ENCODE measurements at regions of chr12 and their contacts with region 1.

Region 1: DNA sequence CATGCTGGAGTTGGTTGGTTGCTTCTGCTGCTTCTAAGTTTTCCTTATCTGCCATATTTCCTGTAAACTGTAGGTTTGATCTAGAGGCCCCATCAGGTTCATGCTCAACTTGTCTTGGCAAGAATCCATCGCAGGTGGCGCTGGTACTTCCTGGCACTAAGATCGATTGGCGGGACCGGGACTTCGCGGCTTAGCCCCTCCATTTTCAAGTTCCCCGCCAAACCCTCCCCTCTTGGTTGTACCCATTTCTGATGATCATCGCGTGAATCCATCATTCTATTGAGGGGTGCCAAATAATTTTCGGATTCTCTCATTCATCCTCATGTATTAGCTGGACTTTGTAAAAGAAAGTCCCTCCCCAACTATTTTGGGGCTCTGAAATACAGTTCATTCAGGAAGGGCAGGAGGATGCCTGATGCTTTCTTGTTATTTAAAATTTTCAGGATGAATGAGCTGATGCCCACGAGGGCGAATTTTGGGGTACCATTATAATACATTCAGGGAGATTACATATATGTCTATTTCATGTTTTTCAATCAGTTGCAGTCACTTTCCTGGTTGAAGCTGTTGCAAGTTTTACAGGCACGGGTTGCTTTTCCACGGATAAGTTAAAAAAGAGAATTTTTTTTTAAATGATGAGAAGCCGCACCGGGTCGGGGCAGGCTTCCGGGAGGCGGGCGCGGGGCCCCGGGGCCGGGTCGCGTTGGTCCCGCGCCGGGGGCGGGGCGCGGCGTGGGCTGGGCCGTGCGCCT is 395 bp upstream of the BRI3BP start:
- DNase-seq: peak; percentile 65 to 66
- H3K4me3 ChIP-seq: peak overlapping the region in 2 of 3 donors; percentile 20 to 59
- H3K27ac ChIP-seq: no peak overlapping the region
- H3K4me1 ChIP-seq: peaks cover 6 to 19% of the 10 kb centered on the region in 2 donors
- H3K27me3 ChIP-seq: no peaks in the 10 kb centered on the region
- CTCF ChIP-seq: peak in 2 of 6 experiments; percentile 16 to 31
- POLR2A ChIP-seq: no peak

Region 2: DNA sequence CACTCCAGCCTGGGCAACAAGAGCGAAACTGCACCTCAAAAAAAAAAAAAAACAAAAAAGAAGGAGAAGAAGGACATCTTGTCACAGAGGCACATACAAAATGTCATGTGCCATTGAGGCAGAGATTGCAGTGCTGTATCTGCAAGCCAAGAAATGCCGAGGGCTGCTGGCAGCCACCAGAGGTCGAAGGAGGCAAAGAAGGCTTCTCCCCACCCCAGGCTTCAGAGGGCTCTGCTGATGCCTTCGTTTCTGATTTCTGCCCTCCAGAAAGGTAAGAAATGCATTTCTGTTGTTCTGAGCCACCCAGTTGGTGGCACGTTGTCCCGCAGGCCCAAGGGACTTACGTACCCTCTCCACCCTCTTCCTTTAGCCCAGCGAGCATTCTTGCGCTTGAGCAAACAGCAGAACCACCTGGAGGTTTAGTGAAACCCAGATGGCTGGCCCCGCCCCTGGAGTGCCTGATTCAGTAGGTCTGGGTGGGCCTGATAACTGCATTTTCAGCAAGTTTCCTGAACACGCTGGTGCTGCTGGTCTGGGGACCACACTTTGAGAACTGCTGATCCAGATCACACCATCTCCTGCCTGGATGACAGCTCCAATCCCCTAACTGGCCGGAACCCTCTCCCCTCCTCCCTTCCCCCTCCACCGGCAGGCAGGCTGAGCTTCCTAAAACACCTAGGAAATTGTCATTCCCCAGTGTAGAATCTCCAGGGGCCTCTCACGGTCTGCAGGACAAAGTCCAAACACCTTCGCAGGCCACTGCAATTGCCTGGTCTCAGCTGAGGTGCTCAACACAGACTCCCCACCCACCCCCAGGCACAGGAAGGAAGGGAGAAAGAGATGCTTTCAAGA is 108.2 kb before region 1 on chr12:
- intact Hi-C with region 1: no loop called
- DNase-seq: peak; percentile 75 to 77
- H3K4me3 ChIP-seq: no peak overlapping the region
- H3K27ac ChIP-seq: peak overlapping the region in 2 of 3 donors; percentile 12
- H3K4me1 ChIP-seq: peaks cover 0 to 4% of the 10 kb centered on the region in 2 donors
- H3K27me3 ChIP-seq: no peaks in the 10 kb centered on the region
- CTCF ChIP-seq: no peak
- POLR2A ChIP-seq: no peak

Region 3: GRCh38 chr12:125065021-125065795 is 72.2 kb after region 1 on chr12 and contains the start of gene AACS:
- intact Hi-C with region 1: loop called (anchors 5 kb)
- DNase-seq: peak; percentile 71
- H3K4me3 ChIP-seq: peak within 1 kb of the TSS; percentile 84 to 96 (median 95)
- H3K27ac ChIP-seq: peak within 1 kb of the TSS in 2 of 3 donors; percentile 16 to 53
- H3K4me1 ChIP-seq: peaks cover 6% of the 10 kb centered on the region in 2 donors
- H3K27me3 ChIP-seq: no peaks in the 10 kb centered on the region
- CTCF ChIP-seq: peak in 1 of 6 experiments; percentile 16
- POLR2A ChIP-seq: peak in 1 of 2 donors; percentile 72
- total RNA-seq, gene AACS: 14.8 to 24.0 (median 20.1) TPM

Measured in thyroid gland (tissue), 4 donors.